MCF 10A (cell line): ENCODE measurements at regions of chrX and their contacts with region 1.

Region 1: DNA sequence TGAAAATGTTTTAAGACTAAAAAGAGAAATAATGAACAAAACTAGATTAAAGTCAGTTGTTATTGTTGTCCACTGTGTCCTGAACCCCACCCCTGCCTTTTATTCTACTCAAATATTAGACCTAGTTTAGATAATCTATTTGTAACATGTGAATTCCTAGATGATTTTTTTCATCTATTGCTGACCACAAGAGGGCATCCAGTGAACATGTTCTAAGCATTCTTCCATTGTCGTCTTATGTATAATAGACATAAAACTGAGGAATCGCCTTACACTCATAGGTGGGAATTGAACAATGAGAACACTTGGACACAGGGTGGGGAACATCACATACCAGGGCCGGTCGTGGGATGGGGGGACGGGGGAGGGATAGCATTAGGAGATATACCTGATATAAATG is 36.4 kb upstream of the HPRT1 start:
- DNase-seq: peak; percentile 40
- H3K4me3 Mint-ChIP-seq: no peak overlapping the region
- H3K27ac Mint-ChIP-seq: no peak overlapping the region
- H3K4me1 Mint-ChIP-seq: no peaks in the 10 kb centered on the region
- H3K27me3 Mint-ChIP-seq: peaks cover 41% of the 10 kb centered on the region
- CTCF ChIP-seq: peak; percentile 25

Region 2: GRCh38 chrX:134460005-134460861 is 36.6 kb after region 1 on chrX and contains the start of gene HPRT1:
- CTCF ChIA-PET with region 1: interaction called, 3 read pairs
- POLR2A ChIA-PET with region 1: no interaction called
- intact Hi-C with region 1: loop called (anchors 5 kb)
- DNase-seq: peak; percentile 67
- H3K4me3 Mint-ChIP-seq: peak within 1 kb of the TSS; percentile 79
- H3K27ac Mint-ChIP-seq: peak within 1 kb of the TSS; percentile 61
- H3K4me1 Mint-ChIP-seq: no peaks in the 10 kb centered on the region
- H3K27me3 Mint-ChIP-seq: peaks cover 15% of the 10 kb centered on the region
- CTCF ChIP-seq: no peak
- total RNA-seq, gene HPRT1: 48.4 and 49.1 TPM in 2 replicates

Region 3: GRCh38 chrX:134484039-134484438 is 60.4 kb after region 1 on chrX:
- CTCF ChIA-PET with region 1: no interaction called
- POLR2A ChIA-PET with region 1: no interaction called
- intact Hi-C with region 1: loop called (anchors 2 kb)
- DNase-seq: peak; percentile 59
- H3K4me3 Mint-ChIP-seq: no peak overlapping the region
- H3K27ac Mint-ChIP-seq: no peak overlapping the region
- H3K4me1 Mint-ChIP-seq: no peaks in the 10 kb centered on the region
- H3K27me3 Mint-ChIP-seq: peaks cover 25% of the 10 kb centered on the region
- CTCF ChIP-seq: peak; percentile 63

Region 4: GRCh38 chrX:134753718-134754008 is 330.0 kb after region 1 on chrX:
- CTCF ChIA-PET with region 1: interaction called, 4 read pairs
- POLR2A ChIA-PET with region 1: no interaction called
- intact Hi-C with region 1: loop called (anchors 5 kb)
- DNase-seq: peak; percentile 31
- H3K4me3 Mint-ChIP-seq: no peak overlapping the region
- H3K27ac Mint-ChIP-seq: no peak overlapping the region
- H3K4me1 Mint-ChIP-seq: no peaks in the 10 kb centered on the region
- H3K27me3 Mint-ChIP-seq: peaks cover 42% of the 10 kb centered on the region
- CTCF ChIP-seq: peak; percentile 26

Region 5: GRCh38 chrX:134782796-134783195 is 359.2 kb after region 1 on chrX:
- CTCF ChIA-PET with region 1: interaction called, 4 read pairs
- POLR2A ChIA-PET with region 1: no interaction called
- intact Hi-C with region 1: loop called (anchors 1 kb)
- DNase-seq: peak; percentile 48
- H3K4me3 Mint-ChIP-seq: no peak overlapping the region
- H3K27ac Mint-ChIP-seq: no peak overlapping the region
- H3K4me1 Mint-ChIP-seq: no peaks in the 10 kb centered on the region
- H3K27me3 Mint-ChIP-seq: peaks cover 18% of the 10 kb centered on the region
- CTCF ChIP-seq: peak; percentile 51

Region 6: DNA sequence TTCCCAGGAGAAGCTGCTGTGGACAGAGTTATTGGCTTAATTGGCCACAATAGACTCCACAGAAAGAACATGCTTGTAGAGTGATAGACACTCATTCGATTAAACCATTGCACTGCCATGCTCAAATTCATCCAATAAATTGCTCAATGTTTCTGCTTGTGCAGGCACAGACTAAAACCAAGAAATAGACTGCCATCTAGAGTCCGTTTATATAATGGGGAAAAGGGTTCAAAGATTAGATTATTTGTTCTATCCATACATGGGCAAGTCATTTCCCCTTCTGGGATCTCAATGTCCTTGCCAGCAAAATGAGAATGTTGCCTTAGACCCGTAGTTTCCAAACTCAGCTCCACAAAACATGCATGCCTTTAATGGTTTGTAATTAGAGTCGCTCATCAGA is 575.9 kb after region 1 on chrX:
- CTCF ChIA-PET with region 1: interaction called, 3 read pairs
- POLR2A ChIA-PET with region 1: no interaction called
- intact Hi-C with region 1: loop called (anchors 5 kb)
- DNase-seq: peak; percentile 52
- H3K4me3 Mint-ChIP-seq: no peak overlapping the region
- H3K27ac Mint-ChIP-seq: no peak overlapping the region
- H3K4me1 Mint-ChIP-seq: peaks cover 5% of the 10 kb centered on the region
- H3K27me3 Mint-ChIP-seq: peaks cover 35% of the 10 kb centered on the region
- CTCF ChIP-seq: peak; percentile 47